ENCODE measurements at regions of chr1 and their contacts with region 1.

Region 1: GRCh38 chr1:39258146-39258924 is 53.8 kb downstream of the MACF1 start:
- H3K4me3 ChIP-seq: no peak overlapping the region
- H3K27ac ChIP-seq: no peak overlapping the region
- H3K4me1 ChIP-seq: peaks cover 11% of the 10 kb centered on the region; the same call in 1 of the 2 replicates
- CTCF ChIP-seq: peak; percentile 84

Region 2: DNA sequence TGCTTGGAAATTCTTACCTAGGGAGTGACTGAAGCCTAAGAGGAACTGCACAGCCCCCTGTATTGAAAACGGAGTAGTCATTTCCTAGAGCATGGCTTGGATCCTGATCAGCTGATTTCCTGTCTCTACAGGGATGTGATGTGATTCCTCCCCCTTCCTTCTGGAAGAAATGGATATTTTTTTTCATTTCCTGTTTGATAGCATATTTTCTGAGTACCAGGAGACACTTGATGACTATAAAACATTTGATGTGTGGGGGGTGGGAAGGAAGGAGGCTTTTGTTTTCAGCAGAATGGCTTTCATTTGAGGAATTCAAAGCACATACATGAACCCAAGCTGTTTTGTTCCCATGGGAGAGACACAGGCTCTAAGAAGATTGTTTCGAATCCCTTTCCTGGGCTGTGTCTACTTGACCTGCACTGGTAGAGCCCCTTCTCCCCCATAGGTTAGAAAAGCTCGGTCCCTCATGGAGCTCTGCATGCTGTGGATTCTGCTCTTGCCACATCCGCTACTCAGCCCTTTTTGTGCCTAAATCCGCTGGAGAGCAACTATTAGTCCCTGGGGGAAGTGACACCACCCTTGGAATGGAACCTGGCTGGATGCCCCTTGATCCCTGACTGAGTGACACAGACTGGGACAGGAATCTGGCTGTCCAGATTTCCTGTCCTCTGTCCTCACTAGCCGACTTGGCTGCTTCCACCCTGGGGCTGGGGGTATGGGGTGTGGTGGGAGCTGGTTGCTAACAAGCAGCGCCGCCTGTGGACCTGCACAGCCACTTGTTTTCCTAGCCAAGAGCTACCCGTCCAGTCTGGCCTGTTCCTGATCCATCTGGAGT is 125.6 kb before region 1 on chr1:
- CTCF ChIA-PET with region 1: interaction called, 18 read pairs
- POLR2A ChIA-PET with region 1: no interaction called
- H3K4me3 ChIP-seq: no peak overlapping the region
- H3K27ac ChIP-seq: no peak overlapping the region; the same call in 1 of the 2 replicates
- H3K4me1 ChIP-seq: peaks cover 13% of the 10 kb centered on the region
- CTCF ChIP-seq: no peak

Region 3: DNA sequence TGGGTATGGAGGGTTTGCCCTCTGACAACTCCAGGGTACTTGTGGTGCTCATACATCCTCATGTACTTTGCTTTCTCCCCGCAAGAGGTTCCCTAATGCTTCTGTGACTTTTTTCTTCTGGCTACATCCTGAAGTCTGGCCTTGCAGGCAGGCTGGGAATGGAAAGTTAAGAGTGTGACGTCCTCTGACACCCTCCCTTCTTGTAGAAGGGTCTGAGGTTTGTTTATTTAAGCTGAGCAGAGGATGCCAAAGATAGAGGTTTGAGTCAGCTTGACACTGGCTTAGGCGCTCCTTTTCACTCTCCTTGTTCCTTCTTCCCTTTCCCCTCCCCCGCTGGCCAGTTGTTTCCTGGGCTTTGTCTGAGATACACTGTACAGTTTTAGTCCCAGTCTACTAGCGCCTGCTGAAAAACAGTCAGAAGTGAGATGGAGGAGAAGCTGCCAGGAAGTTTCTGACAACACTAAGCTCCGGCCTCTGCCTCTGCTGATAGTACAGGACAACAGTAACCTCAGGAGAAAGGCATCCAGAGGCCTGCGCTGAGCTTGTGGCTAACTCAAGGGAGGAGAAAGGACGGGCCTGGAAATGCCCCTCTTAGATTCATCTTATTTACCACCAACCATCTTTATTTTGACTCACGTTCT is 53.8 kb before region 1 on chr1 and contains the start of gene MACF1:
- CTCF ChIA-PET with region 1: interaction called, 24 read pairs
- POLR2A ChIA-PET with region 1: interaction called, 4 read pairs
- H3K4me3 ChIP-seq: peak within 1 kb of the TSS; percentile 29
- H3K27ac ChIP-seq: peak within 1 kb of the TSS; percentile 63
- H3K4me1 ChIP-seq: peaks cover 11% of the 10 kb centered on the region
- CTCF ChIP-seq: peak; percentile 20; the same call in 1 of the 2 replicates

Region 4: DNA sequence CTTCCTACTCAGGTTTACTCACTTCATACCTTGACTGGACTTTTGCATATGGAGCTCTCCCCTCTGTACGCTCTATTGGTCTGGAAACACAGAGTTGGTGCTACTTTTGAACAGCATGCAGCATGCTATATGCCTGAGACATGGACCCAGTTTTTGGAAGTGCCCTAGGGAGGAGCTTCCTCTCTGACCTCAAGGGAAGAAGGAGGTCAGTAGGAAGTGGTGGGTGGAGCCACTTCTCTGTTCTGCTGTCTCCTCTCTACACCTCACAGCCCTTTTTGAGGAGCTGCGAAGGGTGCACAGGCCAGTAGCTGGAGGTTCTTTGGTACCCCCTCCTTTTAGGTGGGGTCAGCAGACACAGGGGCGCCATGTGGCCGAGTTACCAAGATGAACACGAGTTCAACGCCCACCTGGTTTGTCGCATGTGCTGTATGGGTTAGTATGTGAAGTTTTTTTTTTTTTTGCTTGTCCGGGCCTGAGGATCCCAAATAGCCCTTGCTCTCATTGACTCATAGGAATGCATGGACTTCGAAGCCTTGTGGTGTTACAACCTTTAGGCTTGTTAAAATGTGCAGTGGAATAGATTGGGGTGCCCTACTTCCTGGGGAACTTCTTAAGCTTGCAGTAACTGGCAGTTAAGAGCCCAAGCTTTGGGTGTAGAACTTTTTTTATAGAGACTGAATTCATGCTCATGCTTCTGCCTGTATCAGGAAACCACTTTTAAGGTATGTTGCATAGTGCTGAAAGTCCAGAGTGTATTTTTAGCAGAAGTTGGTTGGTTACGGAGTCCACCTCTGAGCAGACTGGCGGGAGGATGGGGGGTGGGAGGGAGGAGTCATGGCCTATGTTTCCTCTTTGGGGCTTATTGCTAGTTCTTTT is 43.1 kb before region 1 on chr1:
- CTCF ChIA-PET with region 1: interaction called, 12 read pairs
- POLR2A ChIA-PET with region 1: no interaction called
- H3K4me3 ChIP-seq: no peak overlapping the region
- H3K27ac ChIP-seq: no peak overlapping the region
- H3K4me1 ChIP-seq: peaks cover 5% of the 10 kb centered on the region; the same call in 1 of the 2 replicates
- CTCF ChIP-seq: no peak